Esophagus muscularis mucosa (tissue), 4 donors: ENCODE measurements at regions of chr15 and their contacts with region 1.

Region 1: DNA sequence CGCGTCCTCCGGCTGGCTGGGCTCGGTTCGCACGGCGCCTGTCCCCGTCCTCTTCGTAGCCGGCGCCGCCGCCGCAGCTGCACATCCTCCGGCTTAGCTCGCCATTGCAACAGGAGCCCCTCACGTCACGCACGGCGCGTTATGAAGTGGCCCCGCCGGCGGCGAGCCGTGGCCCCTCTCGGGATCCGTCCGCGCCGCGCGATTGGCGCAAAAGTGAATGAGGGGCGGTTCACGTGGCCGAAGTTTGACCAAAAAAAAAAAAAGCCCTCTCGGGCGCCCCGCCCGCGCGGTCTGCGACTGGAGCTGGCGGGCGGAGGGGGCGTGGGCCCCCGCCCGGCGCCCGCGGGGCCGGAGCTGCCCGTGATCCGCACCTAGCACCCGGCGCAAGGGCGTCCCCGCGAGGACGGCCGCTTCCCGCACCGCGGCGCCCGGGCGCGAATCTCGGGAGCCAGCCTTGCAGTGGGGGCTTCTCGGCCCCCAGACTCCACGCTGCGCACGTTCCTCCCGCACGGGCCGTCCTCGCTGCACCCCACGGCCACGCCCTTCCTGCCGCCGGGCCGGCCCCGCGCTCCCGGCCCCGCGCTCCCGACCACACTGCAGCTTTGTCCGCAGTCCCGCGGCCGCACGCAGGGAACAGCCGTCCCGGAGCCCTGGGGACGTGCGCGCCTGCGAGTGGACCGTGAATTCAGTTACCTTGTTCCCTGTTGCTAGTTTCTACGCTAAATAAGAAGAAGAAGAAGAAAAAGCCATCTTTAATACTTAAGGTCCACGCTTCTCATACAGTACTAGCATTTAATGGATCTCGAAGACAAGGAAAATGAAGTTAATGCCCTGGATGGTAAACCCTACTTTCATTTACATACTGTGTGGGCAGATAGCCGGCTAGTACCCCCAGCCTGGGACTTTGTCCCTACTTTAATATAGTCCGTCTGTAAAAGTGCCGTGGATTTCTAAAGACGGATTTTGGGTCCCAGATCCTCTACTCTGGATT is at the start of gene CHSY1:
- DNase-seq: peak; percentile 97
- H3K4me3 ChIP-seq: peak within 1 kb of the TSS; percentile 71 to 95 (median 86)
- H3K27ac ChIP-seq: peak within 1 kb of the TSS; percentile 88 to 94 (median 91)
- H3K4me1 ChIP-seq: peaks cover 28 to 48% (median 45%) of the 10 kb centered on the region in 4 donors
- H3K27me3 ChIP-seq: no peaks in the 10 kb centered on the region
- CTCF ChIP-seq: peak; percentile 24 to 41 (median 27)
- EP300 ChIP-seq: no peak
- POLR2A ChIP-seq: peak; percentile 81
- total RNA-seq, gene CHSY1: 13.3 to 31.6 (median 19.6) TPM

Region 2: GRCh38 chr15:100918034-100918689 is 334.0 kb before region 1 on chr15:
- intact Hi-C with region 1: loop called (anchors 10 kb)
- DNase-seq: no peak
- H3K4me3 ChIP-seq: peak overlapping the region; percentile 59 to 82 (median 70)
- H3K27ac ChIP-seq: peak overlapping the region; percentile 63 to 82 (median 72)
- H3K4me1 ChIP-seq: peaks cover 4 to 48% (median 30%) of the 10 kb centered on the region in 4 donors
- H3K27me3 ChIP-seq: peaks cover 0 to 40% (median 4%) of the 10 kb centered on the region in 4 donors
- CTCF ChIP-seq: peak; percentile 84 to 94 (median 91)
- EP300 ChIP-seq: no peak
- POLR2A ChIP-seq: no peak

Region 3: DNA sequence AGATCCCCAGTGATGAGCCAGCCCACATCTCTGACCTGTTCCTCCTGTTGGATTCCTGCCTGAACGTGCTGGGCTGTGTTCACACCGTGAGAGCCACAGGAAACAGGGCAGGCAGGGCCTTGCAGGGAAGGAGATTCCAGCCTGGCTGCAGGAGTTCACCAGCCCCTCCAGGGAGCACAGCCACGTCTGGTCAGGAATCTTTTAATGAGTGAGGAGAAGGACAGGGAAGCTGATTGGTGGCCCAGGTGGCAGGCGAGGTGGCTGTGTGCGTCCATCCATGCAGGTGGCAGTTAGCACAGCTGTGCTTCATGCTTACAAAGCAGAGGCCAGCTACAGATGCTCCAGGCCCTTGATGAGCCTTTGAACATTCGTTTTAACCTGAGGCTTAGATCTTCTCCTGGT is 322.5 kb before region 1 on chr15:
- intact Hi-C with region 1: no loop called
- DNase-seq: peak; percentile 62
- H3K4me3 ChIP-seq: no peak overlapping the region
- H3K27ac ChIP-seq: no peak overlapping the region
- H3K4me1 ChIP-seq: no peaks in the 10 kb centered on the region
- H3K27me3 ChIP-seq: no peaks in the 10 kb centered on the region
- CTCF ChIP-seq: no peak
- EP300 ChIP-seq: no peak
- POLR2A ChIP-seq: no peak

Region 4: GRCh38 chr15:101127506-101128076 is 124.5 kb before region 1 on chr15:
- intact Hi-C with region 1: loop called (anchors 2 kb)
- DNase-seq: no peak
- H3K4me3 ChIP-seq: no peak overlapping the region
- H3K27ac ChIP-seq: peak overlapping the region; percentile 72 to 82 (median 78)
- H3K4me1 ChIP-seq: peaks cover 19 to 29% (median 22%) of the 10 kb centered on the region in 4 donors
- H3K27me3 ChIP-seq: no peaks in the 10 kb centered on the region
- CTCF ChIP-seq: no peak
- EP300 ChIP-seq: no peak
- POLR2A ChIP-seq: no peak

Region 5: DNA sequence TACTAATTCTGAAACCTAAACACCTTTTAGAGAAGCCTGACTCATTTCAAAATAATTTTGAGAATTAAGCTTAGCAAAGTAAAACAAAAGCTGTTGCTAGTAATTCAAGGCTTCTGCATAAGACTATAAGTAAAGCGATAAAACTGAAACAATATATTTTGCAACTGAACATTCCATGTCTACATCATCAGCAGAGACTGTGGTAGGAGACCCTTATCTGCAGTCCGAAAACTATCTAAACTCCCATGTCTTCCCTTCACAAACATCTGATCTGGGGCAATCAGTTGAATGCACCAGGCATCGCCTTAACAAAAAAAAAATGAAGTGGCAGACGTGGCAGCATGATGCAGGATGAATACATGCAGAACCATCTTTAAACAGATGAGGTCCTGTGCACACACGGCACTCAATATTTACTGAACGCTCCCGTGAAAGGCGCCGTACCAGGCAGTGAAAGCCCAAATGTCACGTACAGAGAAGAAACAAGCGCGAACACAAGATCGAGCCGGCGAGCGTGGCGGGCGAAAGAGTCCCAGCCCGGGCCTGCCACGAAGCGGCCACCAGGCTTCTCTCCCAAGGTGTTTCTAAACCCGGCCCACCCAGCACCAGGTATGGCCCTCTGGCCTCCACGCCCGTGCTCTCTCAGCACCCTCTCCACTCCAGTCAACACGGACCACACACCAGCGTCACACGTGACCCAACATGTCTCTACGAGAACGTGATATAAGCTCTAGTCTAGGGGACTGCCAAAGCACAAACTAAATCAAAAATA is 63.3 kb before region 1 on chr15:
- intact Hi-C with region 1: loop called (anchors 5 kb)
- DNase-seq: no peak
- H3K4me3 ChIP-seq: peak overlapping the region; percentile 34 to 53 (median 44)
- H3K27ac ChIP-seq: peak overlapping the region; percentile 68 to 76 (median 70)
- H3K4me1 ChIP-seq: peaks cover 60 to 89% (median 83%) of the 10 kb centered on the region in 4 donors
- H3K27me3 ChIP-seq: no peaks in the 10 kb centered on the region
- CTCF ChIP-seq: no peak
- EP300 ChIP-seq: no peak
- POLR2A ChIP-seq: no peak